ENCODE measurements at regions of chr20 and their contacts with region 1.

Region 1: DNA sequence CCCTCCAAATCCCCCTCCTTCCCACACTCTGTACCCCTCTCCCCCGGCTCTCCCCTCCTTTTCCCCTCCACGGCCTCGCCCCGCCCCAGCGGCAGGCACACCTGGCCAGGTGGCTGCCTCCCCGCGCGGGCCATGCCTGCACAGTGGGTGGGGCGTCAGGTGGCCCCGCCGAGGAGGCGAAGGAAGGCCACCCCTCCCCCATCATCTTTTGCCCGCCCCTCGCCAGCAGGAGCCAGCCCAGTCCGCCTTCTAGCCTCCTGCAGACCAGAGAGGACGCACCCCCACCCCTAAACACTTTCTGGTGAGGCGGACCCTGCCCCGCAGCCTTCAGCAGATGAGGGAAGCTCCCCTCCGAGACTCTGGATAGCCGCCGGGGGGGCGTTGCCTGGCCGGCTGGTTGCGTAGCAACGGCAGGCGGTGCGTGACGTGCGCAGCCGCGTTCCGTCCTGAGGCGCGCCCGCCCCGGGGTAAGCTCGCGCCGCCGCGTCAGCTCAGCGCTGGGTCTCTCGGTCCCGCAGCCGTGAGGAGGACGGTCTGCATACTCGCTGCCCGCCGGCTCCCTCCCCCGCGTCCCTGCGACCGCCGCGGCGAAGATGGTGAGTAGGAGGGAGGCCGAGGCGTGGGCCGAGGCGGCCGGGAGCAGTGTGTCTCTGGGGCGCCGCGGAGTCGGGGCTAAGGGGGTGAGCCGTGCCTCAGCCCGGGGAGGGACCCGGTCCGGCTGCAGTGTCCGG is at the start of gene DSTN:
- DNase-seq: peak; percentile 93 to 96
- H3K4me3 ChIP-seq: peak within 1 kb of the TSS; percentile 84 to 93 (median 88)
- H3K27ac ChIP-seq: peak within 1 kb of the TSS; percentile 89
- H3K4me1 ChIP-seq: peaks cover 3 to 26% (median 15%) of the 10 kb centered on the region in 4 experiments; a peak in 6 of 7 replicates
- H3K27me3 ChIP-seq: no peaks in the 10 kb centered on the region
- CTCF ChIP-seq: no peak
- EP300 ChIP-seq: peak in 1 of 2 experiments; percentile 52; a peak in 1 of 3 replicates
- POLR2A ChIP-seq: no peak
- RAD21 ChIP-seq: peak in 1 of 2 experiments; percentile 11; a peak in 1 of 4 replicates
- total RNA-seq, gene DSTN: 208 TPM in 2 replicates

Region 2: GRCh38 chr20:17536944-17537444 is 32.8 kb before region 1 on chr20:
- CTCF ChIA-PET with region 1: interaction called, 15 read pairs
- POLR2A ChIA-PET with region 1: interaction called, 18 read pairs
- DNase-seq: peak; percentile 71 to 78
- H3K4me3 ChIP-seq: no peak overlapping the region
- H3K27ac ChIP-seq: no peak overlapping the region
- H3K4me1 ChIP-seq: peaks cover 5 to 13% (median 8%) of the 10 kb centered on the region in 4 experiments; a peak in 6 of 7 replicates
- H3K27me3 ChIP-seq: no peaks in the 10 kb centered on the region
- CTCF ChIP-seq: peak; percentile 64 to 99 (median 98)
- EP300 ChIP-seq: no peak
- POLR2A ChIP-seq: no peak
- RAD21 ChIP-seq: peak; percentile 97

Region 3: GRCh38 chr20:17558154-17558940 is 11.4 kb before region 1 on chr20:
- CTCF ChIA-PET with region 1: interaction called, 5 read pairs
- POLR2A ChIA-PET with region 1: interaction called, 26 read pairs
- DNase-seq: peak in 1 of 2 experiments; percentile 45
- H3K4me3 ChIP-seq: no peak overlapping the region
- H3K27ac ChIP-seq: 0 out of 2 replicates have a peak overlapping the region, but pooled peaks have one; percentile 1
- H3K4me1 ChIP-seq: peaks cover 7 to 10% (median 9%) of the 10 kb centered on the region in 4 experiments; a peak in 5 of 7 replicates
- H3K27me3 ChIP-seq: no peaks in the 10 kb centered on the region
- CTCF ChIP-seq: no peak
- EP300 ChIP-seq: no peak
- POLR2A ChIP-seq: peak in 1 of 2 experiments; percentile 49; a peak in 1 of 3 replicates
- RAD21 ChIP-seq: no peak

Region 4: GRCh38 chr20:17594443-17594842 is 24.7 kb after region 1 on chr20:
- CTCF ChIA-PET with region 1: interaction called, 15 read pairs
- POLR2A ChIA-PET with region 1: interaction called, 18 read pairs
- DNase-seq: no peak
- H3K4me3 ChIP-seq: no peak overlapping the region
- H3K27ac ChIP-seq: no peak overlapping the region
- H3K4me1 ChIP-seq: peaks cover 0 to 18% (median 3%) of the 10 kb centered on the region in 4 experiments; a peak in 5 of 7 replicates
- H3K27me3 ChIP-seq: no peaks in the 10 kb centered on the region
- CTCF ChIP-seq: no peak
- EP300 ChIP-seq: no peak
- POLR2A ChIP-seq: no peak
- RAD21 ChIP-seq: no peak

Region 5: GRCh38 chr20:17611540-17612286 is 41.9 kb after region 1 on chr20:
- CTCF ChIA-PET with region 1: interaction called, 23 read pairs
- POLR2A ChIA-PET with region 1: interaction called, 23 read pairs
- DNase-seq: peak in 1 of 2 experiments; percentile 70
- H3K4me3 ChIP-seq: no peak overlapping the region
- H3K27ac ChIP-seq: no peak overlapping the region
- H3K4me1 ChIP-seq: peaks cover 0 to 8% (median 1%) of the 10 kb centered on the region in 4 experiments; a peak in 3 of 7 replicates
- H3K27me3 ChIP-seq: no peaks in the 10 kb centered on the region
- CTCF ChIP-seq: peak; percentile 10 to 49 (median 38)
- EP300 ChIP-seq: no peak
- POLR2A ChIP-seq: peak in 1 of 2 experiments; percentile 20; a peak in 2 of 3 replicates
- RAD21 ChIP-seq: peak; percentile 14 to 46; a peak in 2 of 4 replicates

Measured in H1 (cell line).